ENCODE measurements at regions of chr3 and their contacts with region 1.

Region 1: DNA sequence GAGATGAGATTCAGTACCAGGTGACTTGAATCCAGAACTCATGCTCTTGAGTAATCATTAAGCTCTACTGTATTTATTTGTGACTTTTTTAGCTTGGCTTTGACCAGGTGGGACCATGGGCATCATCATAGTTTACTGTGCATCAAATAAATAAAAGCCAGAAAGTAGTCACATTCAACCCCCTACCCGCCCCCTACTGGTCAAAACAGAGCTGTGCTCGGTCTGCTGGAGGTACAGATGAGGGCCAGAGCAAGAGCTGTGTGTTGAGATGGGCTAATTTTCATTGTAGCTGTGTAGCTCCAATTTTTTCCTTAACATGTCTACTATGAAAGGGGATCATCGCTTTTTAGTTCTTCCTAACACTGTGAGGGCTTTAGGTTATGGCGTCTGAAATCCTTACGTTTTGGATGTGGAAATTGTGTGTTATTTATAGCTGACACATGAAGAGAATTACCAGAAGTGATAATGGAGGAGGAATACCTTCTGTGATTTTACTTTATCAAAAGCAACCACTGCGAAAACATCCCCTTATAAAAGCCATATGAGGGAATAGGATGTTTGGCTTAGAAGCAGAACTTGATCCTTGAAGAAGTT is 375.1 kb downstream of the PTPRG start:
- DNase-seq: peak; percentile 39
- H3K4me3 ChIP-seq: no peak overlapping the region
- H3K27ac ChIP-seq: no peak overlapping the region
- H3K4me1 ChIP-seq: no peaks in the 10 kb centered on the region
- H3K27me3 ChIP-seq: no peaks in the 10 kb centered on the region
- CTCF ChIP-seq: peak; percentile 64

Region 2: GRCh38 chr3:61858056-61858455 is 78.4 kb before region 1 on chr3:
- CTCF ChIA-PET with region 1: no interaction called
- POLR2A ChIA-PET with region 1: no interaction called
- intact Hi-C with region 1: loop called (anchors 5 kb)
- DNase-seq: peak; percentile 4
- H3K4me3 ChIP-seq: no peak overlapping the region
- H3K27ac ChIP-seq: no peak overlapping the region
- H3K4me1 ChIP-seq: no peaks in the 10 kb centered on the region
- H3K27me3 ChIP-seq: no peaks in the 10 kb centered on the region
- CTCF ChIP-seq: peak; percentile 45; the same call in 1 of the 2 replicates

Region 3: GRCh38 chr3:62007036-62007818 is 70.8 kb after region 1 on chr3:
- CTCF ChIA-PET with region 1: no interaction called
- POLR2A ChIA-PET with region 1: no interaction called
- intact Hi-C with region 1: no loop called
- DNase-seq: no peak
- H3K4me3 ChIP-seq: no peak overlapping the region
- H3K27ac ChIP-seq: no peak overlapping the region
- H3K4me1 ChIP-seq: no peaks in the 10 kb centered on the region
- H3K27me3 ChIP-seq: no peaks in the 10 kb centered on the region
- CTCF ChIP-seq: no peak

Measured in A673 (cell line).